ENCODE measurements at regions of chr6 and their contacts with region 1.

Region 1: GRCh38 chr6:27146706-27147505 is 100.6 kb upstream of the PRSS16 start:
- DNase-seq: peak; percentile 85 to 96 (median 94)
- H3K4me3 ChIP-seq: peak overlapping the region; percentile 76 to 77
- H3K4me3 Mint-ChIP-seq: no peak overlapping the region
- H3K27ac ChIP-seq: peak overlapping the region; percentile 97
- H3K27ac Mint-ChIP-seq: no peak overlapping the region
- H3K4me1 ChIP-seq: peaks cover 22% of the 10 kb centered on the region
- H3K4me1 Mint-ChIP-seq: peaks cover 10 to 20% (median 13%) of the 10 kb centered on the region in 4 donors
- H3K27me3 ChIP-seq: no peaks in the 10 kb centered on the region
- H3K27me3 Mint-ChIP-seq: no peaks in the 10 kb centered on the region

Region 2: GRCh38 chr6:26045065-26045927 is 1101.6 kb before region 1 on chr6:
- CTCF ChIA-PET with region 1: no interaction called
- POLR2A ChIA-PET with region 1: interaction called, 20 read pairs
- intact Hi-C with region 1: no loop called
- DNase-seq: peak; percentile 88 to 91 (median 90)
- H3K4me3 ChIP-seq: peak overlapping the region; percentile 72 to 74
- H3K4me3 Mint-ChIP-seq: peak overlapping the region; percentile 88 to 98 (median 94)
- H3K27ac ChIP-seq: peak overlapping the region; percentile 76
- H3K27ac Mint-ChIP-seq: peak overlapping the region; percentile 93 to 99 (median 98)
- H3K4me1 ChIP-seq: peaks cover 14% of the 10 kb centered on the region
- H3K4me1 Mint-ChIP-seq: peaks cover 12 to 28% (median 20%) of the 10 kb centered on the region in 4 donors
- H3K27me3 ChIP-seq: no peaks in the 10 kb centered on the region
- H3K27me3 Mint-ChIP-seq: no peaks in the 10 kb centered on the region

Region 3: DNA sequence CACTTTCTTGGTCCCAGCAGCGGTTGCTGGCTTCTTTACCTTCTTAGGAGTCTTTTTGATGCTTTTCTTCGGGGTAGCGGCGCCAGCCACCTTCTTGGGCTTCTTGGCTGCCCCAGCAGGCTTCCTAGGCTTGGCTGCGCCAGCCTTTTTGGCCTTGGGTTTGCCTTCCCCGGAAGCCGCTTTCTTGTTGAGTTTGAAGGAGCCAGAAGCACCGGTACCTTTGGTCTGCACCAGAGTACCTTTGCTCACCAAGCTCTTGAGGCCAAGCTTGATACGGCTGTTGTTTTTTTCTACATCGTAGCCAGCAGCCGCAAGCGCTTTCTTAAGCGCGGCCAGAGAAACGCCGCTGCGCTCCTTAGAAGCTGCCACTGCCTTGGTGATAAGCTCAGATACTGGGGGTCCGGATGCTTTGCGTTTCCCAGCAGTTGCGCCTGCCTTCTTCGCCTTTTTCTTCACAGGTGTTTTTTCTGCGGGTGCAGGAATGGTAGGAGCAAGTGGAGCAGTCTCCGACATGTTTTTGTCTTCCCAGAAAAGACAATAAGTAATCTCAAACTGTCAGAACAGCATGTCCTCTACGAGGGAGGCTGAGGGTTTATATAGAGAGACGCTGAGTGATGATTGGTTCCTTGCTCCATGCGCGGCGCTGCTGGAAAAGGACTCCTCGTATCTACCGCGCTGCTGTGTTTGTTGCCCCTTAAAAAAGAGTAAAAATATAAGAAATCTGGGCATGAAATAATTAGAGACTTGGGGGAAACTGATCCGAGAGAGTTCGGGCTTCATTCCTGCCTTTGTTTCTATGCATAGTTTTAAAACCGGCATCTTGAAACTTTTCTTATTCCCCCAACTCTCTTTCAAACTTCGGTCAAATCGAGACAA is 912.2 kb before region 1 on chr6:
- CTCF ChIA-PET with region 1: no interaction called
- POLR2A ChIA-PET with region 1: interaction called, 29 read pairs
- intact Hi-C with region 1: no loop called
- DNase-seq: peak; percentile 70 to 87 (median 85)
- H3K4me3 ChIP-seq: peak overlapping the region; percentile 66 to 95
- H3K4me3 Mint-ChIP-seq: peak overlapping the region; percentile 93 to 99 (median 96)
- H3K27ac ChIP-seq: peak overlapping the region; percentile 83
- H3K27ac Mint-ChIP-seq: peak overlapping the region; percentile 90 to 99 (median 96)
- H3K4me1 ChIP-seq: peaks cover 23% of the 10 kb centered on the region
- H3K4me1 Mint-ChIP-seq: peaks cover 18 to 43% (median 26%) of the 10 kb centered on the region in 4 donors
- H3K27me3 ChIP-seq: no peaks in the 10 kb centered on the region
- H3K27me3 Mint-ChIP-seq: no peaks in the 10 kb centered on the region

Region 4: GRCh38 chr6:27059621-27060425 is 87.1 kb before region 1 on chr6:
- CTCF ChIA-PET with region 1: no interaction called
- POLR2A ChIA-PET with region 1: no interaction called
- intact Hi-C with region 1: no loop called
- DNase-seq: no peak
- H3K4me3 ChIP-seq: no peak overlapping the region
- H3K4me3 Mint-ChIP-seq: no peak overlapping the region
- H3K27ac ChIP-seq: no peak overlapping the region
- H3K27ac Mint-ChIP-seq: no peak overlapping the region
- H3K4me1 ChIP-seq: no peaks in the 10 kb centered on the region
- H3K4me1 Mint-ChIP-seq: no peaks in the 10 kb centered on the region
- H3K27me3 ChIP-seq: no peaks in the 10 kb centered on the region
- H3K27me3 Mint-ChIP-seq: peaks cover 9 to 21% of the 10 kb centered on the region in 2 donors

Region 5: DNA sequence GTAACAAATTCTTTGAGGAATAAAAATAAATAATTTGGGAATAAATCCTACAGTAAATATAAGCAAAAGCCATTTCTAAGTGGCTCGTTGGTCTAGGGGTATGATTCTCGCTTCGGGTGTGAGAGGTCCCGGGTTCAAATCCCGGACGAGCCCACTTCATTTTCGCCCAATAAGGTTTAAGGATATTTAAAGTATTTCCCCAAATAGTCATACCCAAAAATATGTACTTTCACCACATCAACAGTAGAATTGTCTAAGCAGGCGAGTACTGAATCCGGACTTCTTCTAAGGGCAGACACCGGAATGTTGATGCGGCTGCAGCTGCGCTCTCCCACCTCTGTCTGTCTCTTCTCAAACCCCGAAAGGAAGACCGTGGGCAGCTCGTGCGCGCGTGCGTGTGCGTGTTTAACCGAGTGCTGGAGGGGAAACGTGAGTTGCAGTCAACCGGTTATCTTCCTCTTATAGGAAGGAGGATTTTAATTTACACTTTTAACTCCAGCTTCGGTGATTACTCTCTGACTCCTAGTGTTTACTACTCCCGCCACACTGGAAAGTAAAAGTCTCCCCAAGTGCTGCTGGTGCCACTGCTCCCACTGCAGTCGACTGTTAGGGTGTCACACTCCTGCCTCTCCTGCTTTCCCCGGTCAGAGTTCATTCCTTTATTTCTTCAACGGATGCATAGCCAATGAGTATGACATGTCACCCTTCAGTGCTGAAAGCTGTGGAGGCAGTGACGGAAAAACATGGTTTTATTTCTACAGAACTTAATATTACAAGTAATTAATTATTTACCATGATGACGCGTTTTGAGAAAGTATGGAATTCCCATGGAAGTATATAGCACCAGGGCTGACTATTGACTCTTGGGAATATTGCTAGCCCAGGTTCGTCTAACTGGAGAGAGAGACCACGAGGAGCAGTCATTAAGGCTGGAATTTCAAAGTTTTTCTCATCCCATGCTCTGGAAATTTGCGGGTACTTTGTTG is 55.0 kb before region 1 on chr6:
- CTCF ChIA-PET with region 1: no interaction called
- POLR2A ChIA-PET with region 1: no interaction called
- intact Hi-C with region 1: no loop called
- DNase-seq: no peak
- H3K4me3 ChIP-seq: no peak overlapping the region
- H3K4me3 Mint-ChIP-seq: peak overlapping the region in 7 of 8 donors; percentile 6 to 75 (median 57)
- H3K27ac ChIP-seq: no peak overlapping the region
- H3K27ac Mint-ChIP-seq: no peak overlapping the region
- H3K4me1 ChIP-seq: peaks cover 14% of the 10 kb centered on the region
- H3K4me1 Mint-ChIP-seq: peaks cover 7 to 16% (median 12%) of the 10 kb centered on the region in 4 donors
- H3K27me3 ChIP-seq: peaks cover 40% of the 10 kb centered on the region
- H3K27me3 Mint-ChIP-seq: peaks cover 48 to 55% of the 10 kb centered on the region in 2 donors

Region 6: DNA sequence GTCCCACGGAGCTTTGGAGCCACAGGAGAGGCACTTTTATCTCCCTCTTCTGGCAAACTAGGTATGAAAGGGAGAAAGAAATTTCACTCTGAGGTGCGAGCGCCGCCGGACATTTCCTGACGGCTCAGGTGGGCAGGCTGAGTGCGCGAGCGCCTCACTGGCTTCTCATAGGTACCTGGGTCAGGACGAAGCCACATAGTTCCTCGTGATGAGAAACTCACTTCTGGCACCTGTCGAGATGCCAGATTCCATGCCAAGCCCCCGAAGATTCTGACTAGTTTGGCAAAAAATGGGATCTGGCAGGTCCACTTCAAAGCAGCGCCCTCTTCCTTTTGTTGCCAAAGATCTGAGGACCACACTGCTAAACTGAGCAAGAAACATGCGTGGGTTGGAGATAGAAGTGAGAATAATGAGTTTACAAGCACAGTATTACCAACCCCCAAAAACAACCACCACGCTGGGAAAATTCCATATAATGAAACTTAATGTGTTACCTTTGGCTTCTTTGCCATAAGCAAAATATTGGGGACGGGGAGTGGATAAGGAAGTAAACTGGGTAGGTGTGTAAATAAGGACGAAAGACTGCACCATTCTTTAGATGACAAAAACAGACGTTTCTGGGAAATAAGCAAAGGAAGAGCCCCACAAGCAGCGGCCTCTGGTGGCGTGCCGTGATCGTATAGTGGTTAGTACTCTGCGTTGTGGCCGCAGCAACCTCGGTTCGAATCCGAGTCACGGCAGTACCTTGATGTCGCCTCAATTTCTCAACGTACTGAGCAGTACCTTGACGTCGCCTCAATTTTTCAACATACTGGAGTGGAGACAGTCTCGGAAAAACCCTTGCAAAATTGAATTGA is 10.8 kb after region 1 on chr6:
- CTCF ChIA-PET with region 1: interaction called, 9 read pairs
- POLR2A ChIA-PET with region 1: interaction called, 99 read pairs
- intact Hi-C with region 1: loop called (anchors 1 kb)
- DNase-seq: peak; percentile 78 to 92 (median 82)
- H3K4me3 ChIP-seq: peak overlapping the region; percentile 18 to 44
- H3K4me3 Mint-ChIP-seq: peak overlapping the region; percentile 81 to 91 (median 84)
- H3K27ac ChIP-seq: no peak overlapping the region
- H3K27ac Mint-ChIP-seq: peak overlapping the region; percentile 68 to 95 (median 85)
- H3K4me1 ChIP-seq: peaks cover 30% of the 10 kb centered on the region
- H3K4me1 Mint-ChIP-seq: peaks cover 21 to 46% (median 38%) of the 10 kb centered on the region in 4 donors
- H3K27me3 ChIP-seq: no peaks in the 10 kb centered on the region
- H3K27me3 Mint-ChIP-seq: peaks cover 0 to 4% of the 10 kb centered on the region in 2 donors

Region 7: DNA sequence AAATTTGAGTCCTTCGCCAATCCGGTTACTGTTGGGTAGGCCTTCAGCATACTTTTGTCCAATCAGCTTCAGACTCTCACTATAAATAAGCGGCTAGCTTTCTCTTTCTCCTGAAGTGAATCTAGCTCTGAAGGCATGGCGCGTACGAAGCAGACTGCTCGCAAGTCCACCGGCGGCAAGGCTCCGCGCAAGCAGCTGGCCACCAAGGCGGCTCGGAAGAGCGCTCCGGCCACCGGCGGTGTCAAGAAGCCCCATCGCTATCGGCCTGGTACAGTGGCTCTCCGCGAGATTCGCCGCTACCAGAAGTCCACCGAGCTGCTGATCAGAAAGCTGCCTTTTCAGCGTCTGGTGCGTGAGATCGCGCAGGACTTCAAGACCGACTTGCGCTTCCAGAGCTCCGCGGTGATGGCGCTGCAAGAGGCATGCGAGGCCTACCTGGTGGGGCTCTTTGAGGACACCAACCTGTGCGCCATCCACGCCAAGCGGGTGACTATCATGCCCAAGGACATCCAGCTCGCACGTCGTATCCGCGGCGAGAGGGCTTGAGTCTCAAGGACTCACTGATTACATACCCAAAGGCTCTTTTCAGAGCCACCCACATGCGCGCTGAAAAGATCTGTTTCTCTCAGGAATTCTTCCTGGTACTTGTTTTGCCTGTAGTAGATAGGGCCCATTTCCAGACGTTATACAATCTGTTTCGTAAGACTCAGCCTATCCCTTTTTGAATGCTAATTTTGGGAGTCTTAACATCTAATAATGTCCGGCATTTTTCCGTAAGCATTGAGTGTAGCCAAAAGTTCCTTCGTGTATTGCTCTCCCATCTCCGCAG is 663.2 kb after region 1 on chr6:
- CTCF ChIA-PET with region 1: interaction called, 6 read pairs
- POLR2A ChIA-PET with region 1: interaction called, 146 read pairs
- intact Hi-C with region 1: no loop called
- DNase-seq: peak; percentile 85 to 94 (median 92)
- H3K4me3 ChIP-seq: peak overlapping the region; percentile 31 to 67
- H3K4me3 Mint-ChIP-seq: peak overlapping the region; percentile 92 to 99 (median 96)
- H3K27ac ChIP-seq: peak overlapping the region; percentile 79
- H3K27ac Mint-ChIP-seq: peak overlapping the region; percentile 94 to 98 (median 97)
- H3K4me1 ChIP-seq: peaks cover 49% of the 10 kb centered on the region
- H3K4me1 Mint-ChIP-seq: peaks cover 39 to 74% (median 50%) of the 10 kb centered on the region in 4 donors
- H3K27me3 ChIP-seq: no peaks in the 10 kb centered on the region
- H3K27me3 Mint-ChIP-seq: no peaks in the 10 kb centered on the region

Region 8: DNA sequence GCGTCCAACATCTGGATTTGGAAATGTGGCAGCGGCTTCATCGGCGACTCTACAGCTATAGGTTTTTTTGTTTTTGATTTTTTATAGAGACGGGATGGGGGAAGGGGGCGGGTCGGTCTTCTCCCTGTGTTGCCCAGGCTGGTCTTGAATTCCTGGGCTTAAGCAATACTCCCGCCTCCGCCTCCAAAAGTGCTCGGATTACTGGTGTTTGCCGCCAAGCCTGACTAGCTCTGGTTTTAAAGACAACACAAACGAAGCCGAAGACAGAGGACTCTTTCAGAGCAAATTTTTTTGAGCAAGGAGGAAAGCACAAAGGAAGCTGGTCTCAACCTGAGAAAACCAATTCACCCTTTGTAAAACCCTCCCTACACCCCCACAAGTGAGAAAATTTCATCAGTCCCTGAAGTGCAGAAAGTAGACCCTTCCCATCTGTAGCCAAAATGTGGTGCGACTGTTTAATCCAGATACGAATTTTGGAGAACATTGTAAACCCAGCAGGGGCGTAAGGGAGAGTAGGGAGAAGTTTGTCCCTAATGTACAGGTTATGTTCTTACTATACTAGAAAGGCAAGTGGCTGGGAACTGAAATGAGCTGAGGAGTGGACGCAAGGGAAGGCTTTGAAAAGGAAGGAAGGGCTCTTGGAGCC is 1591.0 kb after region 1 on chr6:
- CTCF ChIA-PET with region 1: no interaction called
- POLR2A ChIA-PET with region 1: no interaction called
- intact Hi-C with region 1: no loop called
- DNase-seq: no peak
- H3K4me3 ChIP-seq: no peak overlapping the region
- H3K4me3 Mint-ChIP-seq: peak overlapping the region in 1 of 8 donors; percentile 22
- H3K27ac ChIP-seq: no peak overlapping the region
- H3K27ac Mint-ChIP-seq: peak overlapping the region in 4 of 7 donors; percentile 59 to 94 (median 70)
- H3K4me1 ChIP-seq: no peaks in the 10 kb centered on the region
- H3K4me1 Mint-ChIP-seq: peaks cover 0 to 2% (median under 1%) of the 10 kb centered on the region in 4 donors
- H3K27me3 ChIP-seq: peaks cover 61% of the 10 kb centered on the region
- H3K27me3 Mint-ChIP-seq: peaks cover 57 to 67% of the 10 kb centered on the region in 2 donors

Region 9: DNA sequence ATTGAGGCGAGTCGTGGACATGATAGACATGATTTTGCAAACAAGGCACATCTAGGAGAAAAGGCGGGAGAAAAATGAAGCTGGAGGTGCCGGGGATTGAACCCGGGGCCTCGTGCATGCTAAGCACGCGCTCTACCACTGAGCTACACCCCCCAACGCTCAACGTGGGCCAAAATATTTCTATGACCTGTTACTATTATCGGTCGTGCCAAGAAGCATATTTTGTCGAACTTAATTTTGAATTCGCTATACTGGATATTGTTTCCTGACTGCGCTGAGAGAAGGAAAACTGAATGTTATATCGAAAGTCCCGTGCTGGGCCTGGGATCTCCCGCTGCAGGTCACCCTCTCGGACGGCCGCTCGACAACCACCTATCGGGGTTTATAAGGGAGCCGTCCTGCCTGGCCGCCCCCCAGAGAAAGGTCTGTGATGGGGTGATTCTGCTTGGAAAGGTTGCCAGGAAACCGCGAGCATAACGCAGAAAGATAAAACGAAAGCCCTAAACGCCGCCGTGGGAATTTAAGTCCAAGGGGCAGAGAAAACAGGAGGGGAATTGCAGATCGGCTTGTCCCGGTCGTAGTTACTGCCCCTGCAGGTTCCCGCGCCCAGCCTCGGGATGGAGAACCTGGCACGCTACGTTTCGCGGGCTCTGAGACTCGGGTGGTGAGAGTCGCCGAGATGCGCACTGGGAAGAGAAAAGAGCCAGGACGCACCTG is 1716.9 kb after region 1 on chr6:
- CTCF ChIA-PET with region 1: no interaction called
- POLR2A ChIA-PET with region 1: interaction called, 11 read pairs
- intact Hi-C with region 1: no loop called
- DNase-seq: peak; percentile 88 to 91 (median 89)
- H3K4me3 ChIP-seq: peak overlapping the region; percentile 53 to 85
- H3K4me3 Mint-ChIP-seq: peak overlapping the region; percentile 92 to 97 (median 94)
- H3K27ac ChIP-seq: peak overlapping the region; percentile 45
- H3K27ac Mint-ChIP-seq: peak overlapping the region; percentile 79 to 99 (median 97)
- H3K4me1 ChIP-seq: peaks cover 14% of the 10 kb centered on the region
- H3K4me1 Mint-ChIP-seq: peaks cover 21 to 64% (median 43%) of the 10 kb centered on the region in 4 donors
- H3K27me3 ChIP-seq: no peaks in the 10 kb centered on the region
- H3K27me3 Mint-ChIP-seq: peaks cover 4 to 5% of the 10 kb centered on the region in 2 donors

Measured in CD4-positive, alpha-beta memory T cell (primary cell).